Mammary epithelial cell (primary cell): ENCODE measurements at regions of chr21 and their contacts with region 1.

Region 1: GRCh38 chr21:44862869-44863685 is 10.4 kb downstream of the PTTG1IP start:
- DNase-seq: no peak
- H3K4me3 ChIP-seq: no peak overlapping the region
- H3K27ac ChIP-seq: no peak overlapping the region
- H3K4me1 ChIP-seq: peaks cover 33% of the 10 kb centered on the region
- H3K27me3 ChIP-seq: no peaks in the 10 kb centered on the region
- CTCF ChIP-seq: no peak

Region 2: DNA sequence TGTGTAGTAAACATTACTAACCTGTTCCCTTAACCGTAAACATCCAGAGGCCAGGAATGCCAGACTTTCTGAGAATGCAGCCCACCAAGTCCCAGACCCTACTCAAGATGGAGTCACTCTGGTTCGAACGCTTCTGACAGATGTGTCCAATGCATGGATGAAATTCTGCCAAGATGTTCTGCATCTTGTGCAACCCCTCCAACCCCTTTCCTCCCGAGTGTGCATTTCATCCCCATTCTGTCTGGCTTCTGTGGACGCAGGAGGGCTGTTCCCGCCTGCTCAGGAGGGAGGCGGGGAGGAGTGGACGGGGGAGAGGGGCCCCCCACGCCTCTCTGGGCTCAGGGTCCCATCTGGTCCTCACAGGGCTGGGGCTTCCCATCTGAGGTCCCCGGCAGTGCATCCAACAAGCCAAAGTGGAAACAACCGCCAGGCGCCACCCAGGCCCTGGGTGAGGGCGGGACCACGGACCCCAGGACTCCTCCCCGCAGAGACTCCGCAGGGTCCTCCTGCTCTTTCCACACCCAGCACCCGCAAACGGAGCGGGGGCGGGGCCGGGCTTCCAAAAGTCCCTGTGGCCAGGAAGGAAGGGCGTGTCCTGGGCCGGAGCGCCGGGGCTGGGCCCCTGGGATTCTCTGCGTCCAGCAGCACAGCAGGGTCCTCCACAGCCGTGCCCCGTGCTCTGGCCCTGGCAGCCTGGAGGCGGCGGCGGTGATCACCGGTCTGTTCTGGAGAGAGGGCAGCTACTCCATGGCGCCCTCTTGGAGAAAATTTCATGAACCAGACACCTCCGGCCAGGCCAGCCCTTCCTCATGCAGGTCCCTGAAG is 17.5 kb before region 1 on chr21:
- CTCF ChIA-PET with region 1: no interaction called
- dilution Hi-C with region 1: no loop called
- in situ Hi-C with region 1: no loop called
- intact Hi-C with region 1: loop called (anchors 2 kb)
- DNase-seq: no peak
- H3K4me3 ChIP-seq: peak overlapping the region; percentile 15 to 47 (median 28)
- H3K27ac ChIP-seq: no peak overlapping the region
- H3K4me1 ChIP-seq: peaks cover 20% of the 10 kb centered on the region
- H3K27me3 ChIP-seq: no peaks in the 10 kb centered on the region
- CTCF ChIP-seq: peak; percentile 19 to 49